CD4-positive, alpha-beta memory T cell (primary cell): ENCODE measurements at regions of chr6 and their contacts with region 1.

Region 1: GRCh38 chr6:14210663-14211561 is 93.3 kb downstream of the CD83 start:
- DNase-seq: peak; percentile 87 to 93 (median 90)
- H3K4me3 ChIP-seq: peak overlapping the region; percentile 71 to 90
- H3K4me3 Mint-ChIP-seq: peak overlapping the region; percentile 86 to 92 (median 89)
- H3K27ac ChIP-seq: peak overlapping the region; percentile 45
- H3K27ac Mint-ChIP-seq: peak overlapping the region; percentile 22 to 86 (median 77)
- H3K4me1 ChIP-seq: peaks cover 9% of the 10 kb centered on the region
- H3K4me1 Mint-ChIP-seq: peaks cover 6 to 22% (median 13%) of the 10 kb centered on the region in 4 donors
- H3K27me3 ChIP-seq: no peaks in the 10 kb centered on the region
- H3K27me3 Mint-ChIP-seq: no peaks in the 10 kb centered on the region

Region 2: GRCh38 chr6:14187406-14187805 is 23.5 kb before region 1 on chr6:
- CTCF ChIA-PET with region 1: no interaction called
- POLR2A ChIA-PET with region 1: no interaction called
- intact Hi-C with region 1: no loop called
- DNase-seq: no peak
- H3K4me3 ChIP-seq: no peak overlapping the region
- H3K4me3 Mint-ChIP-seq: no peak overlapping the region
- H3K27ac ChIP-seq: no peak overlapping the region
- H3K27ac Mint-ChIP-seq: no peak overlapping the region
- H3K4me1 ChIP-seq: no peaks in the 10 kb centered on the region
- H3K4me1 Mint-ChIP-seq: no peaks in the 10 kb centered on the region
- H3K27me3 ChIP-seq: no peaks in the 10 kb centered on the region
- H3K27me3 Mint-ChIP-seq: no peaks in the 10 kb centered on the region

Region 3: GRCh38 chr6:14316635-14317386 is 105.9 kb after region 1 on chr6:
- CTCF ChIA-PET with region 1: interaction called, 18 read pairs
- POLR2A ChIA-PET with region 1: interaction called, 3 read pairs
- intact Hi-C with region 1: loop called (anchors 1 kb)
- DNase-seq: no peak
- H3K4me3 ChIP-seq: no peak overlapping the region
- H3K4me3 Mint-ChIP-seq: no peak overlapping the region
- H3K27ac ChIP-seq: no peak overlapping the region
- H3K27ac Mint-ChIP-seq: peak overlapping the region in 1 of 7 donors; percentile 7
- H3K4me1 ChIP-seq: no peaks in the 10 kb centered on the region
- H3K4me1 Mint-ChIP-seq: peaks cover 0 to 5% (median 2%) of the 10 kb centered on the region in 4 donors
- H3K27me3 ChIP-seq: no peaks in the 10 kb centered on the region
- H3K27me3 Mint-ChIP-seq: peaks cover 0 to 1% of the 10 kb centered on the region in 2 donors

Region 4: DNA sequence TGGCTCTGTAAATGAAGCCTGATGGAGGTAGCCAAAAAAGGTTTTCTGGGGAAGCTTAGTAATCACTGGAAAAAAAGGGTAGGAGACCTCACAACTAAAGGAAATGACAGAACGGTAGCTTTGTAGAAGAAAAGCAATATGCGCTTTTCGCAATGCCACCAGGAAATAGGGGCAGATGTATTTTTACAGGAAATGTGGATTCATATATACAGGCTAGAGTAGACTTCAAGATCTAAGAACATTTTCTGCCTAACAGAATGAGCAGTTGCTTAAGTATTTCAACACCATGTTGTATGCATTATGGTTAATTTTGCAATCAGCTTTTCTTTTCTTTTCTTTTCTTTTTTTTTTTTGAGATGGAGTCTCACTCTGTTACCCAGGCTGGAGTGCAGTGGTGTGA is 126.2 kb after region 1 on chr6:
- CTCF ChIA-PET with region 1: no interaction called
- POLR2A ChIA-PET with region 1: no interaction called
- intact Hi-C with region 1: no loop called
- DNase-seq: no peak
- H3K4me3 ChIP-seq: no peak overlapping the region
- H3K4me3 Mint-ChIP-seq: no peak overlapping the region
- H3K27ac ChIP-seq: no peak overlapping the region
- H3K27ac Mint-ChIP-seq: no peak overlapping the region
- H3K4me1 ChIP-seq: no peaks in the 10 kb centered on the region
- H3K4me1 Mint-ChIP-seq: no peaks in the 10 kb centered on the region
- H3K27me3 ChIP-seq: no peaks in the 10 kb centered on the region
- H3K27me3 Mint-ChIP-seq: peaks cover 0 to 1% of the 10 kb centered on the region in 2 donors

Region 5: GRCh38 chr6:14711056-14711703 is 500.3 kb after region 1 on chr6:
- CTCF ChIA-PET with region 1: interaction called, 30 read pairs
- POLR2A ChIA-PET with region 1: no interaction called
- intact Hi-C with region 1: no loop called
- DNase-seq: peak in 4 of 5 donors; percentile 30 to 54 (median 40)
- H3K4me3 ChIP-seq: no peak overlapping the region
- H3K4me3 Mint-ChIP-seq: no peak overlapping the region
- H3K27ac ChIP-seq: no peak overlapping the region
- H3K27ac Mint-ChIP-seq: peak overlapping the region in 3 of 7 donors; percentile 4 to 86 (median 57)
- H3K4me1 ChIP-seq: peaks cover 12% of the 10 kb centered on the region
- H3K4me1 Mint-ChIP-seq: peaks cover 4 to 19% (median 9%) of the 10 kb centered on the region in 4 donors
- H3K27me3 ChIP-seq: no peaks in the 10 kb centered on the region
- H3K27me3 Mint-ChIP-seq: peaks cover 0 to 2% of the 10 kb centered on the region in 2 donors

Region 6: DNA sequence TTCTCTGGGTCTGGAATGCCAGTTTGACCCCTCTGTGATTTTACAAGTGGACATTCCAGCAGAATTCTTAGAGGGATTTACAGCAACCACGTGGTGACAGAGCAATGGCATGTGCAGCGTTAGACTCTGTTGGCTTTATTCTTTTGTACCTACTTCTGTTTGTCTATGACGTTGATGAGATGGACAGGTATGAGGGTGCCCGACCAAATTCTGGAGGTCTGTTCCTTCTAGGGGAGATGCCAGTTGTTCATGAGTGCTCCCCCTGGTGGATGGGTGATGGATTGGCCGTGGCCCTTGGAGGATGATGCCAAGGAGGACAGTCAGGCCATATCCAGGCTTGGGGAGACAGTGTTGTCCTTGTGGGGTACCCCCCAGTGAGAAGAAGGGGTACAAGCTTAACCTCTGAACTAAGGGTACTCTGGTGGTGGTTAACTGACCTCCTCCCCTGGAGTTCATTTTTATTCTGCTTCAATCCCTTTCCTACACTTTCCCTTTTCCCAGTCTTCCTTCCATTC is 1253.4 kb after region 1 on chr6:
- CTCF ChIA-PET with region 1: interaction called, 17 read pairs
- POLR2A ChIA-PET with region 1: no interaction called
- intact Hi-C with region 1: loop called (anchors 2 kb)
- DNase-seq: peak; percentile 34 to 56 (median 52)
- H3K4me3 ChIP-seq: no peak overlapping the region
- H3K4me3 Mint-ChIP-seq: no peak overlapping the region
- H3K27ac ChIP-seq: no peak overlapping the region
- H3K27ac Mint-ChIP-seq: no peak overlapping the region
- H3K4me1 ChIP-seq: peaks cover 13% of the 10 kb centered on the region
- H3K4me1 Mint-ChIP-seq: peaks cover 32 to 41% (median 35%) of the 10 kb centered on the region in 4 donors
- H3K27me3 ChIP-seq: no peaks in the 10 kb centered on the region
- H3K27me3 Mint-ChIP-seq: no peaks in the 10 kb centered on the region

Region 7: DNA sequence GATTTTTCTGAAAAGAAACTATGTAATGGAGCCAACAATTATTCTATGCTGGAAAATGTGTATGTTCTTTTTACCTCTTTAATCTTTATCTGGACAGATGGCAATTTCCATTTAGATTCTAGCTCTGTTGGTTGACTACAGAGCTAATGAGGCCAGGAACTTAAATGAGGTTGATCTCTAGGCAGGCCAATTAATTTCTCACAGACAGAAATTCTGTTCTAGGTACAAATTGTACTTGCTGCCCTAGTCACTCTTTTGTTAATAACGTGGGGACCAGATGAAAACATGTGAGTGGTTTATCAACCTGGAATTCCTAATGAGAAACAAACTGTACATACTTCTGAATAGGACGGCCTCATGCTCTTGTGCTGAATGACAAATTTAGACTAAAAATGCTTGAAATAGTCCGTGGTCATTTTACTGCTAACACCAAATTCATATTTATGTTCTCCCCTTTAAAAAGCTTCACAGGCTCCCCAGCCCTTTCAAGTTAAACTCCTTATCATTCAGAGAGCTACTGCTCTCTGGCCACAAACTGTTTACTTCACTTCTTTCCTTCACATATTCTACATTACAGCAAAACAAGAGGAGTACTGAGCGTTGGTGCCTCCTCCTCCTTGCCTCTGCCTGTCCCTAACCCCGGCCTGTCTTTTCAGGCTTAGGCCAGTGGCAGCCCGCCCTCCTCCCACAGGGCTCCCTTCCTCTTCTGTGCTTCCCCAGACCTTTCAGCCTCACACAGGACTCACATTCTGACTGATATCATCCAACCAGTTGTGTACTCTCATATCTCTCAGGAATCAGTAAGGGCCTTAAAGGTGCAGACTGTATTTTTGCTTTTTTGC is 1410.5 kb after region 1 on chr6:
- CTCF ChIA-PET with region 1: interaction called, 4 read pairs
- POLR2A ChIA-PET with region 1: no interaction called
- intact Hi-C with region 1: loop called (anchors 1 kb)
- DNase-seq: no peak
- H3K4me3 ChIP-seq: no peak overlapping the region
- H3K4me3 Mint-ChIP-seq: peak overlapping the region in 1 of 8 donors; percentile 24
- H3K27ac ChIP-seq: no peak overlapping the region
- H3K27ac Mint-ChIP-seq: peak overlapping the region in 3 of 7 donors; percentile 37 to 51 (median 49)
- H3K4me1 ChIP-seq: peaks cover 8% of the 10 kb centered on the region
- H3K4me1 Mint-ChIP-seq: peaks cover 13 to 42% (median 25%) of the 10 kb centered on the region in 4 donors
- H3K27me3 ChIP-seq: no peaks in the 10 kb centered on the region
- H3K27me3 Mint-ChIP-seq: no peaks in the 10 kb centered on the region